ENCODE measurements at regions of chr6 and their contacts with region 1.

Region 1: DNA sequence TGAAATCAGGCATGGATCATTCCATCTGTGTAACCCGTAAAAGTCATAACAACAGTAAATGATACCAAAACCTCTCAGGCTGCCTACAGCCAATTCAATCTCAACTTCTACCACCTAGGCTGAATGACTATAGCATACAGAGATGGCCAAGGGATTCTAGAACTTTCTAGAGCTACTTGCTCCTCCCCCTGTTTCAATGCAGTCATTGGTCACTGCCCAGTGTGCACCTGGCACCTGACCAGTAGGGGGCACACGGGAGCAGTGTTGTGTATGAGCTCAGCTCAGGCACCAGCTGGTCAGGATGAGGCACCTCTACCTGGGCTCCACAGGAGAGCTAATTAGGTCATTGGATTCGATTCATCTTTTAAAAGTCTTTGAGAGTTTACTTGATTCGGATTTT is 86.2 kb downstream of the PLEKHG1 start:
- DNase-seq: peak; percentile 71 to 89 (median 82)
- ATAC-seq: peak; percentile 100
- H3K4me3 ChIP-seq: no peak overlapping the region
- H3K27ac ChIP-seq: no peak overlapping the region
- H3K4me1 ChIP-seq: no peaks in the 10 kb centered on the region
- H3K27me3 ChIP-seq: peaks cover 31 to 49% of the 10 kb centered on the region in 2 experiments; a peak in 4 of 5 replicates
- CTCF ChIP-seq: peak; percentile 85 to 98 (median 85)
- EP300 ChIP-seq: no peak
- POLR2A ChIP-seq: no peak
- RAD21 ChIP-seq: peak; percentile 31 to 63; a peak in 3 of 4 replicates

Region 2: GRCh38 chr6:150741633-150742504 is 56.0 kb after region 1 on chr6:
- CTCF ChIA-PET with region 1: no interaction called
- POLR2A ChIA-PET with region 1: no interaction called
- in situ Hi-C with region 1: no loop called
- intact Hi-C with region 1: loop called (anchors 5 kb)
- DNase-seq: peak in 2 of 4 experiments; percentile 24 to 31
- ATAC-seq: peak; percentile 67
- H3K4me3 ChIP-seq: no peak overlapping the region
- H3K27ac ChIP-seq: no peak overlapping the region
- H3K4me1 ChIP-seq: no peaks in the 10 kb centered on the region
- H3K27me3 ChIP-seq: peaks cover 26 to 36% of the 10 kb centered on the region in 2 experiments
- CTCF ChIP-seq: peak; percentile 52 to 60 (median 59); a peak in 5 of 6 replicates
- EP300 ChIP-seq: no peak
- POLR2A ChIP-seq: no peak
- RAD21 ChIP-seq: peak; percentile 38 to 64

Region 3: DNA sequence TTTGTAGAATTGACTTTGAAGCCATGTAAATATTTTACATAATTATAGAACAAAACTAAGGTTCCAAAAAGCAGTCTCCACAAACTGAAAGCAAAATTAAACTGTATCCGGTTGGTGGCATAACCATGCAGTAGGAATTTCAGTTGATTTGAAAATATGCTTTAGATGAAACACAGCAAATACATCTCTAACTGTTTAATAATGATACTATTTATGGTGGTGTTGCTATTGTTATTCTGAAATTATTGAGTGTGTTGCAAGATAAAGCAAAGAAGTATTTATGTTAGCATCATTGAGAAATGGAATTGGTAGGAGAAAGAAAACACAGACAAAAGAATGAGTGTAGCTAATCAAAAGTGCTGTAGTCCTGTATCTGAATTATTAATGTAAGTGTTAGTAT is 105.9 kb after region 1 on chr6:
- CTCF ChIA-PET with region 1: no interaction called
- POLR2A ChIA-PET with region 1: no interaction called
- in situ Hi-C with region 1: no loop called
- intact Hi-C with region 1: loop called (anchors 5 kb)
- DNase-seq: no peak
- ATAC-seq: no peak
- H3K4me3 ChIP-seq: no peak overlapping the region
- H3K27ac ChIP-seq: no peak overlapping the region
- H3K4me1 ChIP-seq: no peaks in the 10 kb centered on the region
- H3K27me3 ChIP-seq: peaks cover 18 to 37% of the 10 kb centered on the region in 2 experiments
- CTCF ChIP-seq: no peak
- EP300 ChIP-seq: no peak
- POLR2A ChIP-seq: no peak
- RAD21 ChIP-seq: no peak